ENCODE measurements at regions of chr6 and their contacts with region 1.

Region 1: DNA sequence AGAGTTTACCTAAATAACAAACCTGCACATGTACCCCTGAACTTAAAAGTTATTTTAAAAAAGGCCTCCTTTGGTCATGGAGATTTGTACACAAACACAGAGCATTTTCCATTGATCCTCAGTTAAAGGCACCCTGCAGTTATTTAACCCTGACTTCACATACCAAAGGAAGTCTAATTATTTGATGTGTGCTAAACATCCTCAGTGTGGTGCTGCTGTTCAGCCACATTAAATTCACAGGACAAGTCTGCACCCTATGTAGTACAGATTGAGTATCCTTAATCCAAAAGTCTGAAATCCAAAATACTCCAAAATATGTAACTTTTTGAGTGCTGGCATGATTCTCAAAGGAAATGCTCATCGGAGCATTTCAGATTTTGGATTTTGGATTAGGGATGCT is 21.4 kb downstream of the KCNQ5 start:
- DNase-seq: no peak
- H3K4me3 Mint-ChIP-seq: no peak overlapping the region
- H3K27ac Mint-ChIP-seq: no peak overlapping the region
- H3K4me1 Mint-ChIP-seq: peaks cover 6% of the 10 kb centered on the region
- H3K27me3 Mint-ChIP-seq: no peaks in the 10 kb centered on the region
- CTCF ChIP-seq: peak; percentile 31

Region 2: DNA sequence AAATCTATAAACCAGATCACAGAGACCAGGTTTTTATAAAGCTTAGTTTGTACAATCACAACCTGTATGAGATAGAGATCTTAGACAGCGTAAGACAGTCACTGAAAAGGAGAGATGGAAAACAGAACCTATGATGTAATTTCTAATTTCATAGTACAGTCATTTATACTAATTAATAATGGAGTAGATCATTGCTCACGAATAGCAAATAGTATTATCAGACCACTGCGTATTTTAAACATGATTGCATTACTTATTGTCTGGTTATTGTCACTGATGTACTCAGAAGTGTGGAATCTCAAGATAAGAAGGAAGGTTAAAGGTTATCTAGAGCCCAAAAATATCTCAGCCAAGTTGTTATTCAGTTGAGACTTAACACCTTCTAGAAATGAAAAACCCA is 466.4 kb after region 1 on chr6:
- CTCF ChIA-PET with region 1: interaction called, 4 read pairs
- POLR2A ChIA-PET with region 1: no interaction called
- intact Hi-C with region 1: loop called (anchors 1 kb)
- DNase-seq: no peak
- H3K4me3 Mint-ChIP-seq: no peak overlapping the region
- H3K27ac Mint-ChIP-seq: no peak overlapping the region
- H3K4me1 Mint-ChIP-seq: no peaks in the 10 kb centered on the region
- H3K27me3 Mint-ChIP-seq: no peaks in the 10 kb centered on the region
- CTCF ChIP-seq: no peak